ENCODE measurements at regions of chr22 and their contacts with region 1.

Region 1: DNA sequence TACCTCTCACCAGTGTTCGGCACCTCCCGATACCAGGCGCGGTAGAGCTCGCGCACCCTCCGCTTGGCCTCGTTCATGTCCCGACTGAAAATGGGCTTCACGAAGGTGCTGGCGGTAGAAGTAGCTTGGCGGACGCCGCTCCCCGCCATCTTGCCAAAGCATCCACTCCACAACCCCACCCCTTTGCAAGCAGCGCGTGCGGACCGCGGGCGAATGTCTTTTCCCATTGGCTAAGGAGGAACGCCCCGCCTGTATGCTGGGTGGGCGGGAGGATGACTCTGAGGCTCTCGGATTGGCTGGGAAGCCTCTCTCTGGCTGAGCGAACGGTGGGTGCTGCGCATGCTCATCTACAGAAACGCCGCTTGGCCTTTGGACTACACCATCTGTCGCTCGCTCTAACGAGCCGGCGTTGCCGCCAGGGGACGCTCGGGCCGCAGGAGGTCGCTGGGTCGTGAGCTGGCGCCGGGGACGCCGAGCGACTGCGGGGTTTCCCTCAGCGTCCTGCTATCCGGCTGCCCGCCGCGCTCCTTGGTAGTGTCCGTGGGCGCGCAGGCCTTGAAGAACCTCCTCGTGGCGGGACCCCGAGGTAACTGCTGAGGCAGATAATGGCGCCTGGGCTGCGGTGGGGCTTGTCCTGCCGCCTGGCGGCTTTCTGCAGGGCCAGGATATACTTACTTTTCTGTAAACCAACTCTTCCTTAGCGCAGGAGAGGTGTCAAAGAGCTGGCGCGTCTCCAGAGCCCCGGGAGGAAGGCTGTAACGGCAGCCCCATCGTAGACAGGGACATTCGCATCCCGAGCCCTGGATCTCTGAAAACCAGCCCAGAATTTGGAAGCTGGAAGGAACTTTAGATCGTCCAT is at the start of gene NDUFA6:
- DNase-seq: peak; percentile 99
- H3K4me3 Mint-ChIP-seq: peak within 1 kb of the TSS; percentile 97
- H3K27ac Mint-ChIP-seq: peak within 1 kb of the TSS; percentile 99
- H3K4me1 Mint-ChIP-seq: peaks cover 26% of the 10 kb centered on the region
- H3K27me3 Mint-ChIP-seq: no peaks in the 10 kb centered on the region
- total RNA-seq, gene NDUFA6: 124 to 129 TPM

Region 2: GRCh38 chr22:41832553-41833368 is 258.1 kb before region 1 on chr22 and contains the start of gene SREBF2:
- CTCF ChIA-PET with region 1: no interaction called
- POLR2A ChIA-PET with region 1: no interaction called
- intact Hi-C with region 1: loop called (anchors 5 kb)
- DNase-seq: peak; percentile 100
- H3K4me3 Mint-ChIP-seq: peak within 1 kb of the TSS; percentile 98
- H3K27ac Mint-ChIP-seq: peak within 1 kb of the TSS; percentile 99
- H3K4me1 Mint-ChIP-seq: peaks cover 44% of the 10 kb centered on the region
- H3K27me3 Mint-ChIP-seq: no peaks in the 10 kb centered on the region
- total RNA-seq, gene SREBF2: 131 to 137 TPM

Region 3: DNA sequence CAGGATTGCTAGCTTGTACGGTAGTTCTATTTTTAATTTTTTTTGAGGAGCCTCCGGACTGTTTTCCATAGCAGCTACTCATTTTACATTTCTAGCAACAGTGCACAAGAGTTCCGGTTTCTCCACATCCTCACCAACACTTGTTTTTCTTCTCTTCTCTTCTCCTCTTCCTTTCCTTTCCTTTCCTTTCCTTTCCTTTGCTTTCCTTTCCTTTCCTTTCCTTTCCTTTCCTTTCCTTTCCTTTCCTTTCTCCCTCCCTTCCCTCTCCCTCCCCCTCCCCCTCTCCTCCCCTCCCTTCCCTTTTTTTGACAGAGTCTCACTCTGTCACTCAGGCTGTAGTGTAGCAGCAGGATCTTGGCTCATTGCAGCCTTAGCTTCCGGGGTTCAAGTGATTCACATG is 82.9 kb before region 1 on chr22:
- CTCF ChIA-PET with region 1: no interaction called
- POLR2A ChIA-PET with region 1: no interaction called
- intact Hi-C with region 1: no loop called
- DNase-seq: no peak
- H3K4me3 Mint-ChIP-seq: no peak overlapping the region
- H3K27ac Mint-ChIP-seq: no peak overlapping the region
- H3K4me1 Mint-ChIP-seq: peaks cover 5% of the 10 kb centered on the region
- H3K27me3 Mint-ChIP-seq: peaks cover 2% of the 10 kb centered on the region

Region 4: GRCh38 chr22:42025436-42025835 is 65.4 kb before region 1 on chr22:
- CTCF ChIA-PET with region 1: no interaction called
- POLR2A ChIA-PET with region 1: no interaction called
- intact Hi-C with region 1: no loop called
- DNase-seq: no peak
- H3K4me3 Mint-ChIP-seq: no peak overlapping the region
- H3K27ac Mint-ChIP-seq: no peak overlapping the region
- H3K4me1 Mint-ChIP-seq: peaks cover 14% of the 10 kb centered on the region
- H3K27me3 Mint-ChIP-seq: no peaks in the 10 kb centered on the region

Region 5: GRCh38 chr22:42079319-42080251 is 11.2 kb before region 1 on chr22 and contains the start of gene SMDT1:
- CTCF ChIA-PET with region 1: interaction called, 31 read pairs
- POLR2A ChIA-PET with region 1: interaction called, 52 read pairs
- intact Hi-C with region 1: loop called (anchors 1 kb)
- DNase-seq: peak; percentile 98
- H3K4me3 Mint-ChIP-seq: peak within 1 kb of the TSS; percentile 95
- H3K27ac Mint-ChIP-seq: peak within 1 kb of the TSS; percentile 95
- H3K4me1 Mint-ChIP-seq: peaks cover 29% of the 10 kb centered on the region
- H3K27me3 Mint-ChIP-seq: no peaks in the 10 kb centered on the region
- total RNA-seq, gene SMDT1: 59.5 to 59.9 TPM

Region 6: DNA sequence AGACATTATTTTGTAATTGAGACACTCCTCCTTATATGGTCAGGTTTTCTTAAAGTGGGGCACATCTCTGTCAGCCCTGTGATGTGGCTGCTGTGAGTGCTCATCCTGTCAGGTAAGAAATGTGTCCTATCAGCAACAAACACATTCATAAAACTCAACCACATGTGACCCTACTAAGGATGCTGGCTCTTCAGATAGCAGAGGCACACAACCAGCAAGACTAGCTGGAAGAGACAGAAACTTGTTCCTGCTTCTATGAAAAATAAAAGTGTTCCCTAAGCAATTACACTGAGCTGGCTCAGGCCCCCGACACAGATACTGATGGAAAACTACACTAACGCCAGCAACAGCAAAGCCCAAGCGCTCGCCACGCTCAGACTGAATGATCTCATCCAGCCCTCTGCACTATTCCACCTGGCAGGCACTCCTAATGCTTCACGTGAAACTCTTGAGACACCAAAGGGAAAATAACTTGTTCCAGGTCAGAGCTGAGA is 89.6 kb after region 1 on chr22:
- CTCF ChIA-PET with region 1: interaction called, 3 read pairs
- POLR2A ChIA-PET with region 1: interaction called, 4 read pairs
- intact Hi-C with region 1: loop called (anchors 5 kb)
- DNase-seq: peak; percentile 75
- H3K4me3 Mint-ChIP-seq: peak overlapping the region; percentile 61
- H3K27ac Mint-ChIP-seq: peak overlapping the region; percentile 94
- H3K4me1 Mint-ChIP-seq: peaks cover 92% of the 10 kb centered on the region
- H3K27me3 Mint-ChIP-seq: no peaks in the 10 kb centered on the region

Region 7: DNA sequence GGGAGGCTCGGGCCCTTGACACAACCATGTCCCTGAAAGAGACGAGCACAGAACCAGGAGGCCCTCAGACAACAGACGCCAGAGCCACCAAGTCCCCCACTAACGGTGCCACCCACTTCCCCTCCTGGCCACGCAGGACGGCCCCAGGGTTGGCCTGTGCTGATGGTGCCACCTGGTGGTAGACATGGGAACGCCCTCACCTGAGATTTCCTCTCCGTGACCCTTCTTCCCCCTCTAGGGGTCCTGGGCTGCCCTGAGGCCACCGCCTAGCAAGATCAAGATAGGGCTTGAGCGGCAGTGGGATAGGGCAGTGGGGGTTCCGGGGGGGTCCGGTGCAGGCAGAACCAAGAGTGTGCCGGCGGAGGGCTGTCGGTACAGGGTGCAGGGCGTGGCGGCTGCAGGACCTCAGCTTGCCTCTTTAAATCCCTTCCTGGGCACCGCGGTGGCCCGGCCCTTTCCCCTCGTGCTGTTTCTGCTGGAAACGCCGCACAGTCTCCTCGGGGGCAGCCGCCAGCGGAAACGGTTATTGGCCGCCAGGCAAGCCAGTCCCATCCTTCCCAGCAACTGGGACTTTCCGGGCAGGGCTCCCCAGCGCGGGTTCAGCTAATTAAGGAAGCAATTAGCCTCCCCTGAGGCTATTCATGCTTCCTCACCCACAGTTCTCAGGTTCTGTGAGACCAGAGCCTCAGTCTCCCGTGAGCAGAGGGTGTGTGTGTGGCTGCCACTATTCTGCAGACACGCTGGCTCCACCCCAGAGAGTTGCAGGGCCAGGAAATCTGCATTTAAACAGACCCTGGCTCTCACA is 346.9 kb after region 1 on chr22:
- CTCF ChIA-PET with region 1: interaction called, 75 read pairs
- POLR2A ChIA-PET with region 1: interaction called, 23 read pairs
- intact Hi-C with region 1: loop called (anchors 2 kb)
- DNase-seq: peak; percentile 86
- H3K4me3 Mint-ChIP-seq: peak overlapping the region; percentile 74
- H3K27ac Mint-ChIP-seq: peak overlapping the region; percentile 23
- H3K4me1 Mint-ChIP-seq: peaks cover 18% of the 10 kb centered on the region
- H3K27me3 Mint-ChIP-seq: no peaks in the 10 kb centered on the region

Region 8: GRCh38 chr22:42553475-42554361 is 462.9 kb after region 1 on chr22 and contains the start of gene SERHL2:
- CTCF ChIA-PET with region 1: no interaction called
- POLR2A ChIA-PET with region 1: no interaction called
- intact Hi-C with region 1: loop called (anchors 5 kb)
- DNase-seq: peak; percentile 90
- H3K4me3 Mint-ChIP-seq: peak within 1 kb of the TSS; percentile 69
- H3K27ac Mint-ChIP-seq: no peak within 1 kb of the TSS
- H3K4me1 Mint-ChIP-seq: peaks cover 11% of the 10 kb centered on the region
- H3K27me3 Mint-ChIP-seq: no peaks in the 10 kb centered on the region
- total RNA-seq, gene SERHL2: 0.83 to 1.2 TPM

Measured in activated CD4-positive, alpha-beta memory T cell treated with anti-CD3 and anti-CD28 coated beads for 36 hours (primary cell).